K562 (cell line): ENCODE measurements at regions of chr15 and their contacts with region 1.

Region 1: DNA sequence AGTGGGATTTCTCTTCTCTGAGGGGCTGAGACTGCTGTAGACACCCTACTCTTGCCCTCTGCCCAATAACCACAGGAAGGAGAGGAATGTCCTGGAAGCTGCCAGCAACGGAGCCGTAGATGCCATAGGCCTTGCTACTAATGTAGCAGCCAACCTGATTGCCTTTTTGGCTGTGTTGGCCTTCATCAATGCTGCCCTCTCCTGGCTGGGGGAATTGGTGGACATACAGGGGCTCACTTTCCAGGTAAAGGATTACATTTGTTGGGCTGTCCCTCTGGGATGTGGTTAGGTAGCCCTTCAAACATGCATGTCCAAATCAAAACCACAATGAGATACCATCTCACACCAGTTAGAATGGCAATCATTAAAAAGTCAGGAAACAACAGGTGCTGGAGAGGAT is 16.1 kb downstream of the SLC28A2 start:
- DNase-seq: peak in 3 of 4 experiments; percentile 13 to 36 (median 15)
- ATAC-seq: peak; percentile 65; the same call in 1 of the 3 replicates
- H3K4me3 ChIP-seq: no peak overlapping the region
- H3K27ac ChIP-seq: no peak overlapping the region
- H3K4me1 ChIP-seq: no peaks in the 10 kb centered on the region
- H3K27me3 ChIP-seq: no peaks in the 10 kb centered on the region
- CTCF ChIP-seq: peak; percentile 35 to 56 (median 48); a peak in 4 of 6 replicates
- EP300 ChIP-seq: no peak
- POLR2A ChIP-seq: no peak
- RAD21 ChIP-seq: peak in 1 of 2 experiments; percentile 43; a peak in 2 of 4 replicates

Region 2: DNA sequence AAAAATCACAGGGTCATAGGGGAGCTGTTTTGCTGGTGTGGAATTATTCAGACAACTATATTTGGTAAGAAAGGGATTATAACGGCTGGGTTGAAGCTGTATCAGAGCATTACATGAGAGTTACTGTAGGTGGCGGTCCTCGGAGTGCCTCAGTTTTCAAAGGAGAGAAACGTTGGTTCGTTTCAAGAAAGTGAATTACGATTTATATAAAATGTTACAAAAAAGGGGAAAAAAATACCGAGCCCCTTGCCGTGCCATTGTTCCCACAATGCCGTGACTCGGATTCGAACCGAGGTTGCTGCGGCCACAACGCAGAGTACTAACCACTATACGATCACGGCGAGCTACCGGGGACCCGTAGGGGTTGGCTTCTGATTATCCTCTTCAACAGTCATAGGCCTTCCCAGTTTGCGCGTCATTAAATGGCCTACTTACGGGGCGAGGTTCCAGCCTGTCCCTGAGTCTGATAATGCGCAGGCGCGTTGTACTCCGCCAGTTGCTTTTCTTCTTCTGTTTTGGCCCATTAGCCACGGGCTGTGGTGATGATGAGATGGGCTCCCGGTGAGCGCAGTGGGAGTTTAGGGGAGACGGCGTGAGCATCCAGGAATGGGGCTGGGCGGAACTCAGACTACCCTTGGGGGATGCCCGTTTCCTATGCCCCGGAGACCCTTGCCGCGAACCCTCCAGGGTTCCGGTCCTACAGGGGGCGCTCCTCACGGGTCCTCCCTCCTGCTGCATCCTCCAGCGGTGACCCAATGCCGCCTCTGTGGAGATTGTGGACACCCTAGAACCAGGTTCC is 69.6 kb before region 1 on chr15:
- CTCF ChIA-PET with region 1: no interaction called
- POLR2A ChIA-PET with region 1: no interaction called
- in situ Hi-C with region 1: no loop called
- intact Hi-C with region 1: loop called (anchors 2 kb)
- DNase-seq: peak; percentile 77 to 94 (median 81)
- ATAC-seq: peak; percentile 76
- H3K4me3 ChIP-seq: peak overlapping the region; percentile 79
- H3K27ac ChIP-seq: peak overlapping the region; percentile 92
- H3K4me1 ChIP-seq: peaks cover 0 to 2% of the 10 kb centered on the region in 2 experiments; a peak in 2 of 5 replicates
- H3K27me3 ChIP-seq: no peaks in the 10 kb centered on the region
- CTCF ChIP-seq: peak; percentile 72 to 89 (median 81)
- EP300 ChIP-seq: peak; percentile 45; the same call in 1 of the 2 replicates
- POLR2A ChIP-seq: peak; percentile 76
- RAD21 ChIP-seq: peak in 1 of 2 experiments; percentile 26; a peak in 2 of 4 replicates